Aorta (tissue), 5 donors: ENCODE measurements at regions of chr4 and their contacts with region 1.

Region 1: GRCh38 chr4:44726262-44726871 is at the start of gene GNPDA2:
- DNase-seq: peak; percentile 94 to 97
- ATAC-seq: peak; percentile 98
- H3K4me3 ChIP-seq: peak within 1 kb of the TSS; percentile 19 to 69
- H3K27ac ChIP-seq: peak within 1 kb of the TSS in 1 of 2 donors; percentile 8
- H3K4me1 ChIP-seq: no peaks in the 10 kb centered on the region
- H3K27me3 ChIP-seq: no peaks in the 10 kb centered on the region
- total RNA-seq, gene GNPDA2: 13.5 to 19.6 TPM

Region 2: GRCh38 chr4:44678094-44679041 is 48.0 kb before region 1 on chr4 and contains the start of gene GUF1:
- intact Hi-C with region 1: loop called in 1 of 2 experiments (anchors 5 kb)
- DNase-seq: peak; percentile 95
- ATAC-seq: peak; percentile 97
- H3K4me3 ChIP-seq: peak within 1 kb of the TSS; percentile 87 to 98
- H3K27ac ChIP-seq: peak within 1 kb of the TSS; percentile 44 to 88
- H3K4me1 ChIP-seq: no peaks in the 10 kb centered on the region
- H3K27me3 ChIP-seq: no peaks in the 10 kb centered on the region
- total RNA-seq, gene GUF1: 9.6 to 11.5 TPM

Region 3: DNA sequence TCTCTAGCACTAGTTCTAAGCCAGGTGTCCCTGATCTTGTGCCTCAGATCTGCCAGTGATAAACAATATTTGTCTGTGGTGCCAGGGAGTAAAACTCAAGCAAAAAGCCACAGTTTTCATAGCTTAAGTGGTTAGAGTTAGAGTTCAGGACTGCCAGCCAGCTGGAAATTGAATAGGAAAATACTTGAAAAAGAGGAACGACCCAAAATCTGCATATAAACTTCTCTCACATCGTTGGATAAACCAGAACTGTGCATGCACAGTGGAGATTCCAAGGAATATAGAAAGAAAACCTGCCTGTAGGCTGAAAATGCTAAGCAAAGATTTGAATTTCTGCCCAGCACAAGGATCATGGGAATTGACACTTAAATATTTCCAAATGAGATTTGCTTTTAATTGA is 34.9 kb after region 1 on chr4:
- intact Hi-C with region 1: no loop called
- DNase-seq: no peak
- ATAC-seq: no peak
- H3K4me3 ChIP-seq: no peak overlapping the region
- H3K27ac ChIP-seq: no peak overlapping the region
- H3K4me1 ChIP-seq: no peaks in the 10 kb centered on the region
- H3K27me3 ChIP-seq: no peaks in the 10 kb centered on the region